HEK293 (cell line): ENCODE measurements at regions of chr15 and their contacts with region 1.

Region 1: DNA sequence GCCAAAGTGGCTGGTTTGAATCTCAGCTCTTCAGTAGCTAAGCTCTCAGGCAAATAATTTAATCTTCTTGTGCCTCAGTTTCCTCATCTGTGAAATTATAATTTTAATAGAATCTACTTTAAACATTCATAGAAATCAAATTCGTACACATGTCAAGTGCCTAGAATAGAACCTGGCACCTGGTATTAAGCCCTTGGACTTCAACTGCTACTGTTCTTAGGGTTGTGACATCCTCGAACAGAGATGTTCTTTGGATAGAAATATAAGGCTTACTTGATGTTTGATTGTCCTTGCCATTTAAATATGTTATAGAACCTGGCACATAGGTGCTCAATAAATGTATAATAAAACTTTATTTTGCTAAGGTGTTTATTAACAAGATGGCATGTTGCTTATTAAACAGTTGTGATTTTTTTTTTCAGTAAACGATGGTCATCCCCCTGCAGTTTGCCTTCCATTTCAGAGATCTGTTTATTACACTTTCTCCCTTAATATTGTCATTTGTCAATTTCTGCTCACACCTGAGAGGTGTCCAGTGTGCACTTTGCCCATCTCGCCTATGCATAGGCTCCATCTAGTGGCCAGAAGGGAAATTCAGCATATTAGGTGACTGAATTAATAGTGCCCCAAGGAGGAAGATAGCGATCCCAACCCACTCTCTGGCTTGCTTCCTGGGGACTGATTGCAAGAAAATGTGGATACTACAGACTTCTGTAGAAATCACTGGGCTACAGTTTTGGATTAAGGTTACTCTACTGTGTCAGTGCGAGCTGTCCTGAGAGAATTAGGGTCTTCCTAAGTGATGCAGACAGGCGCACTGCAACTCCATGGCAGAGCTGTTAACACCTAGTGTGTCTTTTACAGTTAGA is 10.7 kb downstream of the IGF1R start:
- H3K4me3 ChIP-seq: no peak overlapping the region
- H3K27ac ChIP-seq: no peak overlapping the region
- H3K4me1 ChIP-seq: peaks cover 24% of the 10 kb centered on the region
- CTCF ChIP-seq: peak; percentile 42; the same call in 1 of the 2 replicates

Region 2: GRCh38 chr15:98609144-98609857 is 49.8 kb before region 1 on chr15:
- CTCF ChIA-PET with region 1: no interaction called
- POLR2A ChIA-PET with region 1: no interaction called
- H3K4me3 ChIP-seq: no peak overlapping the region
- H3K27ac ChIP-seq: no peak overlapping the region
- H3K4me1 ChIP-seq: no peaks in the 10 kb centered on the region
- CTCF ChIP-seq: no peak

Region 3: DNA sequence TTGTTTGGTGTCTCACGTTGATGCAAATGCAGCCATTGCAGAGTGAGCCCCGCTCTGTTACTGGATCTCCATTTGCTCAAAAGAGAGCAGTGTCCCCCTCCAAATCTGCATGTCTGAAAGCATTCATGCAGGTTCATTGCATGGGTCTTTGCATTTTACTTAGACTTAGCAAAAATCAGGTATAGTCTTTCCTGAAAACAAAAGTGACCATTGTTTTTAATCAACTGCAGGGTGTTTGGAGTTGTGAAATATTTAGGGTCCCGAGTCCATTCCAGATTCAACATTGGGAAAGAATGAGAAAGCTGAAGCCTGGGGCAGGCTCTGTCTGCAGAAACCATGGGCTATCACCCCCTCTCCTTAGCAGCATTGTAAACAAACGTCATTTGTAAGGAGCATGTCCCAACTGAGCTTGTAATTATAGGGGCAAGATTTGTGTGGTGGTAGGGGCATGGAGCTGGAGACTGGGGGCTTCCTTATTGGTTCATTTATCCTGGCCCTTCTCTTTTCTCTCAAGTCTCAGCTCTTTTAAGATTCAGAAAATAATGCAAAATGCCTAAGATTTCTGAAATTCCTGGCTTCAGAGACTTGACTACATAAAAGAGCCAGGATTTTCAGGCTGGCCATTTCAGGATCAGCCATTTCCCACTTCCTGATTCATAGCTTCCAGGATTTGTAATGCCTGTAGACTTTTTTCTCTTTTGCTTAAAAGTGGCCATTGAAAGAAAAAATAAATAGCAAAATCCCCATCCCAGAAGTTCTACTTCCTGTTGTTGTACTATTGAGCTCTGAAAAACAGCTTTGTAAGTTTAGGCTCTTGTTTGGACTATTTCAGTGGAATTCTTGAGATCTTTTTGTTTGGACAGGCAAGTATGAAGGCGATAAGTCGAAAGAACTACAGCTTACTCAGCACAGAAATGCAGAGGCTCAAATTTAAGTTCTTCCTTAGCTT is 12.3 kb after region 1 on chr15:
- CTCF ChIA-PET with region 1: interaction called, 12 read pairs
- POLR2A ChIA-PET with region 1: no interaction called
- H3K4me3 ChIP-seq: no peak overlapping the region
- H3K27ac ChIP-seq: no peak overlapping the region
- H3K4me1 ChIP-seq: peaks cover 41% of the 10 kb centered on the region
- CTCF ChIP-seq: no peak